Endothelial cell of umbilical vein (primary cell): ENCODE measurements at regions of chr10 and their contacts with region 1.

Region 1: DNA sequence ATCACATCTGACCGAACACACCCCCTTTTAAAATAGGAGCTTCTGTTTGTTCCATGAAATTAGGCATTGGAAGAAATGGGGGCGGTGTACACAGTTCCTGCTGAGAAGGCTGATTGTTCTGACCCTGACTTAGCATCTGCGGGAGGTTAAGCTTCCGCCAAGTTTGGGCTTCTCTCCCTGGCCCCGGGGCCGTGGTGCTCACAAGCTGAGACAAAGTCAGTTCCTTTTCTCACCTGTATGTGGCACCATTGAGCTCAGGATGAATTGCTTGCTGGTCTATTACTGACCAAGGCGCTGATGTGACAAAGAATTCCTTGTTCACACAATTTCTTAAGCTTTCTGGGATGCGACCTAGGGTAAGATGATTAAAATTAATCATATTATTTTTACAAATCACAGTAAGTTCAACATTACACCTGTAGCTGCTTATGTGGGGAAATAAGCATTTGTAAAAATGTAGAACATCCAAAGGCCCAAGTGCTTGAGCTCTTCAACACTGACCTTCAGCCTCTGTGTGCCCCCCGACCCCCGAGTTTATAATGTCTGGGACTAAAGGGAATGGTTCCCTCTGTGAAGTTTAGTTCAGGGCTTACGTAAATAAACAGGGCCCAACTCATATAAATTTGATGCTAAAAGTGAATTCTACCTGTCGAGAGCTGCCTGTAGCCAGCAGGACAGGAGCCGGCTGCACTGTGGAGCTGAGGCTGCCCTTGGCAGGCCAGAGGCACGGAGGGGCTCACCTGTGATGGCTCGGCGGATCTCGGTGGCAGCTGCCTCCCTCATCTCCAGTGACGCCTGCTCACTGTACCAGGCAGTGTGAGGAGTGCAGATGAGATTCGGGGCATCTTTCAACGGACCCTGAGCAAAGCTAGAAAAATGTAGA is 50.8 kb downstream of the ZRANB1 start:
- DNase-seq: peak; percentile 60
- H3K4me3 ChIP-seq: no peak overlapping the region
- H3K27ac ChIP-seq: no peak overlapping the region
- H3K4me1 ChIP-seq: no peaks in the 10 kb centered on the region
- H3K27me3 ChIP-seq: no peaks in the 10 kb centered on the region
- CTCF ChIP-seq: peak; percentile 45 to 55
- POLR2A ChIP-seq: no peak

Region 2: DNA sequence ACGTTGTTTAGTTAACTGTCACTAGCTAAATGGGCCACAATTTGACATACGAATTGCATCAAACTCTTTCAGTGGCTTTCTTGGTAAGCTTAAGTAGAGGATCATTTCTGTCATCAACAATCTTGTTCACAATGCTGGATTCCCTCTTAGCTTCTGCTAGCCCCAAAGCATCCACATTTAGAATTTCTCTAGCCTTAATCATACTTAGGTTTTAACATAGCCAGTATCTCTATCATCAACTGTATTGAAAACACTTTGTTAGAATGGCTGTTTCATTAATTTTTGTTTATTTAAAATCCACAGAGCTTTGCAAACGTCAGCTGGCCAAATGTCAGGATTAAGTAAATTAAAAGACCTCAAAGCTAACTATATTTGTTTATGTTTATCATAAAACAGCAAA is 150.0 kb before region 1 on chr10:
- CTCF ChIA-PET with region 1: no interaction called
- POLR2A ChIA-PET with region 1: no interaction called
- dilution Hi-C with region 1: no loop called
- intact Hi-C with region 1: no loop called
- DNase-seq: no peak
- H3K4me3 ChIP-seq: no peak overlapping the region
- H3K27ac ChIP-seq: no peak overlapping the region
- H3K4me1 ChIP-seq: no peaks in the 10 kb centered on the region
- H3K27me3 ChIP-seq: no peaks in the 10 kb centered on the region
- CTCF ChIP-seq: no peak
- POLR2A ChIP-seq: no peak

Region 3: DNA sequence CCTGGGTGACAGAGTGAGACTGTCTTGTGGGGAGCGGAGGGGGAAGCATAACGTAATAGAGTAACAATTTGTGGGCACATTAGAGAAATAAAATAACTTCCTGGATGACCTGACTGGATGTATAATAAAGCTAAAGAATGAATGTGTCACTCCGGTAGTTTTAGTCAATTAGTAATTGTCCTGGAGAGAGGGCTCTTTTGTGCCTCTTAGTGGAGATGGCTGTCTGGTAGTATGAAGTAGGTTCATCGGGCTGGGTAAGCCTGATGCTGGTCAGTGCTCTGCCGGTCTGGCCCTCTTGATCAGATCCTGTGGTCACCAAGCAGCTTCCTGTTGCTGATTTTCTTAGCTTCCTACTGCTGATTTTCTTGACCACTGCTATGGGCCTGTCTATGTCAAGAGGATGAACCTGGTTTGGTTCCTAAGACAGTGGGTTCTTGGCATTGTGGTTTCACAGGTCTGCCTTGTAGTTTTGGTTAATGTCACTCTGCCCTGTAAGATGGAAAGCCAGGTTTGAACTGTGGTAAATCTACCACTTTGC is 16.7 kb before region 1 on chr10:
- CTCF ChIA-PET with region 1: interaction called, 10 read pairs
- POLR2A ChIA-PET with region 1: no interaction called
- dilution Hi-C with region 1: no loop called
- intact Hi-C with region 1: no loop called
- DNase-seq: peak; percentile 64
- H3K4me3 ChIP-seq: no peak overlapping the region
- H3K27ac ChIP-seq: peak overlapping the region; percentile 56
- H3K4me1 ChIP-seq: peaks cover 16% of the 10 kb centered on the region
- H3K27me3 ChIP-seq: no peaks in the 10 kb centered on the region
- CTCF ChIP-seq: no peak
- POLR2A ChIP-seq: no peak

Region 4: DNA sequence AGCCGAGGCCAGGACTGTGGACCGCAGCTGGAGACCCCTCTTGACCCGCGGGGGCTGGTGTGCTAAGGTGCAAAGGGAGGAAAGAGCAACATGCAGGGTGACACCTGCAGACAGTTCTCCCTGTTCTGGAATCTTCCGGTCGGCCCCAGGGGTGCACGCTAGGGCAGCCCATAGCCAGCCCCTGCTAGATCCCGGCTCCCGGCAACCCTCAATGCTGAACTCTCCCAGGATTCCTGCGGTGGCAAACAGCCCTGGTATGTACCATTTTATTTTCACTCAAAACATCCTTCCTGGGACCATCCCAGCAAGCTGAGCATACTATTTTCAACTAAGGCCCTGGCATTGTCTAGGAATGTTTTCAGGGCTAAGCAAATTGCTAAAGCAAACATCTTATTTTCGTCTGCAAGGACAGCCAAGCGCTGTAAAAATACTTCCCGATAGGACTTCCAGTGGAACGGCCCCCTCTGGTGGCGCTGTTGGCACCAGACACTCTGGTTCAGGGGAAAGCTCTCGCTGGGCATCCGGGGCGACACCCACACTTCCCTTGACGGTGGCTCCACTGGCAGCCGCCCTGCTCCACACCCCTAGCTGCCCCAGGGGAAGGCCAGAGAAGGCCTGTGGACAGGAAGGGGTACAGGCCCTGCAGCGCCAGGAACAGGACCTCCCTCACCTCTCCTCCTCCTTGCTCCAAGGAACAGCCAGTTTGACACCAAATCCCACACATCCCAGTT is 68.3 kb after region 1 on chr10:
- CTCF ChIA-PET with region 1: interaction called, 17 read pairs
- POLR2A ChIA-PET with region 1: no interaction called
- dilution Hi-C with region 1: no loop called
- intact Hi-C with region 1: loop called (anchors 1 kb)
- DNase-seq: peak; percentile 80
- H3K4me3 ChIP-seq: no peak overlapping the region
- H3K27ac ChIP-seq: peak overlapping the region; percentile 44
- H3K4me1 ChIP-seq: peaks cover 57% of the 10 kb centered on the region
- H3K27me3 ChIP-seq: no peaks in the 10 kb centered on the region
- CTCF ChIP-seq: peak; percentile 82 to 90
- POLR2A ChIP-seq: no peak

Region 5: GRCh38 chr10:125343118-125343925 is 350.6 kb after region 1 on chr10:
- CTCF ChIA-PET with region 1: interaction called, 15 read pairs
- POLR2A ChIA-PET with region 1: no interaction called
- dilution Hi-C with region 1: no loop called
- intact Hi-C with region 1: loop called (anchors 2 kb)
- DNase-seq: peak; percentile 51
- H3K4me3 ChIP-seq: no peak overlapping the region
- H3K27ac ChIP-seq: no peak overlapping the region
- H3K4me1 ChIP-seq: no peaks in the 10 kb centered on the region
- H3K27me3 ChIP-seq: peaks cover 4 to 6% of the 10 kb centered on the region in 2 experiments
- CTCF ChIP-seq: peak; percentile 47 to 54
- POLR2A ChIP-seq: no peak

Region 6: GRCh38 chr10:125719146-125720001 is 726.7 kb after region 1 on chr10 and contains the start of gene EDRF1:
- CTCF ChIA-PET with region 1: interaction called, 3 read pairs
- POLR2A ChIA-PET with region 1: no interaction called
- dilution Hi-C with region 1: no loop called
- intact Hi-C with region 1: loop called (anchors 5 kb)
- DNase-seq: peak; percentile 100
- H3K4me3 ChIP-seq: peak within 1 kb of the TSS; percentile 65 to 98 (median 93)
- H3K27ac ChIP-seq: peak within 1 kb of the TSS; percentile 67
- H3K4me1 ChIP-seq: peaks cover 6% of the 10 kb centered on the region
- H3K27me3 ChIP-seq: no peaks in the 10 kb centered on the region
- CTCF ChIP-seq: no peak
- POLR2A ChIP-seq: peak; percentile 97
- total RNA-seq, gene EDRF1: 24.7 and 27.8 TPM in 2 replicates